ENCODE measurements at regions of chr12 and their contacts with region 1.

Region 1: GRCh38 chr12:49776413-49776812 is 35.1 kb downstream of the TMBIM6 start:
- DNase-seq: peak; percentile 83
- ATAC-seq: peak; percentile 95

Region 2: DNA sequence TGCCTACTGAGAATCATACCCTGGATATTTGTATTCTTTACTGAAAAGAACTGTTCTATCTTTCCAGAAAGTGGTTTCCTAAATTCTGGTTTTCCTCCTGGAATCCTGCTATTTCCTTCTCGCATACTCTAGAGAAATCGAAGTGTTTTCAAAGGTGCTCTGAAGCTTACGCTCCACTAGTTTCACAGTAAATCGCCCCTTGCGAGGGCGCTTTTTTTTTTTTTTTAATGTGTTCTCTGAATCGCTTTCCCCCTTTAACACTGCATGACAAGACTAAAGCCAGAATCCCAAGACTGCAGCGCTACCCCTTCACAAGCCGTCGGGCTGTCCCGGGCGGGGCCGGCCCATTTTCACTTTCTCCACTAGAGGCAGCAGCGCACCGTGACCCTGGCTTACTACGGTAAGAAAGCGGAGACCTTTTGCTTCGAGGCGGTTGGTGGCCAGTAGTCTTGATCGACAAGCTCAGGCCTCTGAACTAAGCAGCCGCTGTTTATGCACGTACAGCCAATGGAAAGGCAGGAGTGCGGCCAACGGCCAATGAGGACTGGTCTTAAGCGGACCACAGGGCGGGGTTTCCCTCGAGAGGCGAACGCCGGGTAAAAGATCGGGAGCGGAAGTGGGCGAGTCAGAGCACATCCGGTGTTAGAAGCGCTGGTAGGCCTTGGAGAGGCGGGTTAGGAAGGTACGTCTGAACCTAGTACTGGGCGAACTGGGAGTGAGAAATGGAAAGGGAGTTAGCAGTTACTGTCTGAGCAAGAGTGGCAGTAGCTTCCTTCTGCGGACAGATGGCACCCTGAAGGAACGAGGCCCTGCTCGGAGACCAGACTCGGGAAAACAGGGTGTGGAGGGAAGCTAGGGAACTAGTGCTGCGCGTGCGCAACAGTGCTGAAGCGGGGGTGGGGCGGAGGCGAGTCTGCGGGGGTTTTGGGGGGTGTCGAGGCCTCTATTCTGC is 35.2 kb before region 1 on chr12 and contains the start of gene TMBIM6:
- intact Hi-C with region 1: no loop called
- DNase-seq: peak; percentile 99
- ATAC-seq: peak; percentile 99
- total RNA-seq, gene TMBIM6: 396 TPM

Region 3: DNA sequence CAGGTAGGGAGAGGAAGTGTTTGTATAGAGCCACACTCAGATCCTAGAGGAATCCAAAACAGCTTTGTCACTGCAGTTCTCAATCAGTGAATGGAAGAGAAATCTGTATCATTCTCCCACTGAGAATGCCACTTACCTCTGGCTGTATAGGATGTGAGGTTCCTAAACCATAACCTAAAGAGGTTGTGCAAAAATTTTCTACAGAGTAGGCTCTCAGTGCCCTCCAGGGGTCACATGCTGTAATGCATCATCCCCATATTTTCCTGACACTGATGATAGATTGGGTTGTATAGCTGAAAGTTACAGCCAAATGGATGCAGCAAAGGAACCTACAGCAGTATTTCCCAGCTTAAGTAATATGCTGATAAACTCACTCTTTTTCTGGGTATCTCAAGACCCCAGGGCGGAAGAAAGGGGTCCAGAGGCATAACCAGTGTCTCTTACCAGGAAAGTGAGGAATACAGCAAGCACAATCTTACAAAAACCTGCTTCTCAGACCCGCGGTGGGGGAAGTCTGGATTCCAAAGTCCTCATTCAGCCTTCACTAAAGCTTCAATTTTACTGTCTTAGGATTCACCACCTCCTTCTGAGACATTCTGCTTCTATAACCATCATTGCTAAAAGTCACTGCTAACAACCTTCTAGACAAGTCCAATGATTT is 62.7 kb after region 1 on chr12:
- intact Hi-C with region 1: loop called (anchors 5 kb)
- DNase-seq: no peak
- ATAC-seq: no peak

Region 4: DNA sequence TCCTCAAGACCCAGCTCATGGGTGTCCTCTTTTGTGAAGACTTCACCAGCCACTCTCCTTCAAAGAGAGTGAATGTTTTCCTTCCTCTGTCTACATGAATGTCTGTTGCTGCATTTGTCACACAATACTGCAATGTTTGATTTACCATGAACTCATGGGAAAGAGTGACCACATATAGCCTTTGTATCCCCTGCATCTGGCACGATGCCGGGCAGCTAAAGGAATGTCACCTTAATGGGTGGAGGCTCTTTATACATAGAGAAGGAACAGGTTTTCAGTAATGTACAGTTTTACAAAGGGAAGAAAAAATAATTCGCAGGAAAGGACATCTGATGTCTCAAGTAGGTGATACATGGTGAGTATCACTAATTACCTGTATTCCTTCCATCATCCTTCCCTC is 78.6 kb after region 1 on chr12:
- intact Hi-C with region 1: no loop called
- DNase-seq: no peak
- ATAC-seq: no peak

Region 5: DNA sequence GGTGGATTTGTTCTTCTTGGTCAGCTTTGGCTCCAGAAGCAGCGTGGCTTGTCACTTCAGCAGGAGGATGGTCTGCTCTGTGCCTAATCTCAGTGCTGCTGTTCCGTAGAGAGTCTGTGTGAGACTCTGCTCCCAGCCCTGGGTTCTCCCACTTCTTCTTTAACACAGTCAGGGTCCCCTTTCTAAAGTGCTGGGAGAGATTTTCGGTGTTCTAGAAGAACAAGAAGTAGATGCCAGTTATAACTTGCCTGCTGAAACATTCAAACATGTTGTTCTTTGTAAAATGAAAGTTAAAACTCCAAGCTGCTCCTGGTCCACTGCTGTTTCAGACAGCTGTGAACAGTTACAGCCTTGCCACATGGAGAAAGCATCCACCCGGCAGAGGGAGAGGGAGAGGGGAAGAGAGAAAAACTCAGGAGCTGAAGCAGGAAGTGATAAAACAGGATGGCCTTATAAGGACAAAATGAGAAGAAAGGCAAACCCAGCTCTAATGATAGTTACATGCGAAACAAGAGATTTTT is 445.9 kb after region 1 on chr12:
- intact Hi-C with region 1: no loop called
- DNase-seq: peak; percentile 74
- ATAC-seq: peak; percentile 93

Region 6: GRCh38 chr12:50297027-50297426 is 520.6 kb after region 1 on chr12:
- intact Hi-C with region 1: no loop called
- DNase-seq: no peak
- ATAC-seq: no peak